ENCODE measurements at regions of chr6 and their contacts with region 1.

Region 1: GRCh38 chr6:8180327-8181159 is 78.2 kb upstream of the EEF1E1 start:
- DNase-seq: no peak
- ATAC-seq: peak; percentile 90
- H3K4me3 ChIP-seq: no peak overlapping the region
- H3K27ac ChIP-seq: peak overlapping the region; percentile 82
- H3K4me1 ChIP-seq: peaks cover 60% of the 10 kb centered on the region
- H3K27me3 ChIP-seq: no peaks in the 10 kb centered on the region
- CTCF ChIP-seq: no peak

Region 2: DNA sequence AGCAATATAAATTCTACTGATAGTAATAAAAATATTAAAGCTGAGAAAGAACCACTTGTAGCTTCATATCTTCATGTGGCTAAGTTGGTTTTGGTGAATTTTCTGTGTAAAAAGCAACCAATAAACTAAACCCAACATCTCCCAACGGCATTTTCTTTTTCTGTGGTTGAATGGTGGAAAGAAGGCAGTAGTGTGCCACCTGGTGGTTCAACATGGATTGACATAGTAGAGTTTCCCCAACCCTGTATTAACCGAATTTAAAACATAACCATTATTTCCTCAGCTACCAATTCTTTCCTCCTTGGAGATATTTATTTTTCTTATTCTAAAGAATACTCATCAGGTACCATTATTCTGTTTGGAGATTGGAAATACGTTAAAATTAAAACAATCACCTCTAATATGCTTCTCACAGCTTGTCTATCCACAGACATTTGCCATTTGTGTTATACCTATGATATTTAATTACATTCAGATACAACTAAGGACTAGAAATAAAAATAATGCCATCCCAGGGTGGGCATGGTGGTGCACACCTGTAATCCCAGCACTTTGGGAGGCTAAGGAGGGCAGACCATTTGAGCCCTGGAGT is 38.9 kb after region 1 on chr6:
- CTCF ChIA-PET with region 1: interaction called, 4 read pairs
- POLR2A ChIA-PET with region 1: interaction called, 3 read pairs
- in situ Hi-C with region 1: no loop called
- intact Hi-C with region 1: loop called (anchors 5 kb)
- DNase-seq: peak; percentile 32
- ATAC-seq: peak; percentile 91
- H3K4me3 ChIP-seq: no peak overlapping the region
- H3K27ac ChIP-seq: peak overlapping the region; percentile 81
- H3K4me1 ChIP-seq: peaks cover 21% of the 10 kb centered on the region
- H3K27me3 ChIP-seq: no peaks in the 10 kb centered on the region
- CTCF ChIP-seq: peak; percentile 76

Measured in Panc1 (cell line).